GM12878 (cell line): ENCODE measurements at regions of chr17 and their contacts with region 1.

Region 1: GRCh38 chr17:1820528-1821252 is 9.0 kb downstream of the SMYD4 start:
- DNase-seq: peak; percentile 36
- ATAC-seq: peak; percentile 79
- H3K4me3 ChIP-seq: no peak overlapping the region
- H3K27ac ChIP-seq: peak overlapping the region; percentile 61
- H3K4me1 ChIP-seq: peaks cover 16% of the 10 kb centered on the region
- H3K27me3 ChIP-seq: no peaks in the 10 kb centered on the region
- CTCF ChIP-seq: no peak
- EP300 ChIP-seq: no peak
- POLR2A ChIP-seq: no peak
- RAD21 ChIP-seq: no peak

Region 2: GRCh38 chr17:1709971-1710806 is 110.5 kb before region 1 on chr17 and contains the start of gene TLCD2:
- CTCF ChIA-PET with region 1: no interaction called
- POLR2A ChIA-PET with region 1: no interaction called
- RAD21 ChIA-PET with region 1: no interaction called
- SMC1A ChIA-PET with region 1: no interaction called
- in situ Hi-C with region 1: no loop called
- intact Hi-C with region 1: no loop called
- DNase-seq: no peak
- ATAC-seq: peak; percentile 27
- H3K4me3 ChIP-seq: peak within 1 kb of the TSS; percentile 63; the same call in 1 of the 2 replicates
- H3K27ac ChIP-seq: no peak within 1 kb of the TSS
- H3K4me1 ChIP-seq: peaks cover 9% of the 10 kb centered on the region
- H3K27me3 ChIP-seq: peaks cover 0 to 5% of the 10 kb centered on the region in 2 experiments; a peak in 2 of 4 replicates
- CTCF ChIP-seq: no peak
- EP300 ChIP-seq: no peak
- POLR2A ChIP-seq: peak; percentile 55
- RAD21 ChIP-seq: no peak
- polyA plus RNA-seq, gene TLCD2: 0.02 TPM

Region 3: DNA sequence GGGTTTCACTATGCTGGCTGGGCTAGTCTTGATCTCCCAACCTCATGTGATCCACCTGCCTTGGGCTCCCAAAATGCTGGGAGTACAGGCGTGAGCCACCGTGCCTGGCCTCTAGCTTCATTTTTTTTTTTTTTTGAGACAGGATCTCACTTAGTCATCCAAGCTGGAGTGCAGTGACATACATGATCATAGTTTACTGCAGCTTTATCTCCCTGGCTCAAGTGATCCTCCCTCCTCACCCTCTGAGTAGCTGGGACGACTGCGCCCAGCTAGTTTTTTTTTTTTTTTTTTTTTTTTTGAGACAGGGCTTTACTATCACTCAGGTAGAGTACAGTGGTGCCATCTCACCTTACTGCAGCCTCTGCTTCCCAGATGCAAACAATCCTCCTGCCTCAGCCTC is 18.8 kb after region 1 on chr17:
- CTCF ChIA-PET with region 1: interaction called, 9 read pairs
- POLR2A ChIA-PET with region 1: interaction called, 12 read pairs
- RAD21 ChIA-PET with region 1: no interaction called
- SMC1A ChIA-PET with region 1: interaction called, 26 read pairs
- in situ Hi-C with region 1: no loop called
- intact Hi-C with region 1: no loop called
- DNase-seq: no peak
- ATAC-seq: no peak
- H3K4me3 ChIP-seq: no peak overlapping the region
- H3K27ac ChIP-seq: no peak overlapping the region
- H3K4me1 ChIP-seq: peaks cover 10% of the 10 kb centered on the region
- H3K27me3 ChIP-seq: no peaks in the 10 kb centered on the region
- CTCF ChIP-seq: no peak
- EP300 ChIP-seq: no peak
- POLR2A ChIP-seq: no peak
- RAD21 ChIP-seq: no peak

Region 4: DNA sequence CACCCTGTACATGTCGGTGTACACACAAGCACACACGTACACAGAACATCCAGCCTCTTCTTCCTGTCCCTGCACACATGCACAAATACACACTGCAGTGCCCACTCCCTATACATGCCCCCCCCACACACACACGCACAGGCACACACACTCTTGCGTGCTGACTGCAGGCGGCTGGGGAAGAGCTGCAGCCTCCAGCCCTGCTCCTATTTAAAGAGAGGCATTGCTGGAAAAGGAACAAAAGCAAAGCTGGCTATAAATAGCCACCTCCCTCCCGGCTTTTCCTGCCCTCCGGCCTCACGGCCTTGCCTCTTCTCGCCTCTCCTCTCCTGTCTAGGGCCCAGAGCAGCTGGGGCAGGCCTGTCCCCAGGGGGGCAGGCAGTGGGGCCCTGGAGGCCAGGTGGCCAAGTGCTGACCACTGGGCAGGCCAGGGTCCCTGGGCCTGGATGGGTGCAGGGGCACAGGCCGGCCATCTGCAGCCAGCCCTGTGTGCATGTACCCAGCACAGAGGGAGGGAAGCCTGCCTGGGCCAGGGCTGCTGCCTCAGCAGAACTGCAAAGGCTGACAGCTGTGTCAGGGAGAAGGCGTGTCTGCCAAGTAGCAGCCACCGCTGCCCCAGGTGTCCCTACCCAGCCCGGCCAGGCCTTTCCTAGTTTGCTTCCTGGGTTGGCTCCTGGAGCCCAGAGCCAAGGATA is 179.0 kb after region 1 on chr17:
- CTCF ChIA-PET with region 1: no interaction called
- POLR2A ChIA-PET with region 1: no interaction called
- RAD21 ChIA-PET with region 1: no interaction called
- SMC1A ChIA-PET with region 1: no interaction called
- in situ Hi-C with region 1: no loop called
- intact Hi-C with region 1: no loop called
- DNase-seq: no peak
- ATAC-seq: no peak
- H3K4me3 ChIP-seq: no peak overlapping the region
- H3K27ac ChIP-seq: no peak overlapping the region
- H3K4me1 ChIP-seq: no peaks in the 10 kb centered on the region
- H3K27me3 ChIP-seq: peaks cover 1 to 3% of the 10 kb centered on the region in 2 experiments; a peak in 2 of 4 replicates
- CTCF ChIP-seq: no peak
- EP300 ChIP-seq: no peak
- POLR2A ChIP-seq: no peak
- RAD21 ChIP-seq: no peak